Activated CD4-positive, alpha-beta memory T cell treated with anti-CD3 and anti-CD28 coated beads for 36 hours (primary cell): ENCODE measurements at regions of chr3 and their contacts with region 1.

Region 1: DNA sequence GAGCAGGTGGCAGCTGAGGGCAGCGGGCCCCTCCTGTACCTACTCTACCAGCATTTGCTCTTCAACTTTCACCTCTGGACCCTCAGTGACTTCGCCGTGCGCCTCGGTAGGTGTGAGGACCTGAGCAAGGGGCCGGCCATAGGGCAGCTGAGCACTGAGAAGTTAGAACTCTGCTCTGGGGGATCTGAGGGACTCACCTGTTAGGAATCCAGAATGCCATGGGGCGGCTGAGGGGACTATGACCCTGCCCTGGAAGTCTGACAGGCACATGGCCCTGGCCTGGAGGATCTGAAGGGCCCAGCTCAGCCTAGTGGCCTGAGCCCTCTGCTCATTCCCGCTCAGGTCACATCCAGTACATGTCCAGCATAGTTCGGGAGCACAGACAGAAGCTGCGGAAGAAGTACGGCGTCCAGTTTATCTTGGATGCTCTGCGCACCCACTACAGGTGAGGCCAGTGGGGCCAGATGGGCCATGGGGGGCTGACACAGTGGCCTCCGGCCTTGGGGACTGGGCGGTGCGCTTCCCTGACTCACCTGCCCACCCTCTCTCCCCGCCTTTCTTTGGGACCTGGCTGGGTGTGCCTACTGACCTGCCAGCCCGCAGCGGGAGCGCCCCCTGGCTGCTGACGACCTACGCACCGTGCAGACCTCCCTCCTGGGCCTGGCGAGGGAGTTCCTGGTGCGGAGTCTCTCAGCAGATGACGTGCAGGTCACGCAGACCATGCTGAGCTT is 18.8 kb downstream of the NBEAL2 start:
- DNase-seq: peak; percentile 82
- H3K4me3 Mint-ChIP-seq: no peak overlapping the region
- H3K27ac Mint-ChIP-seq: peak overlapping the region; percentile 66
- H3K4me1 Mint-ChIP-seq: peaks cover 17% of the 10 kb centered on the region
- H3K27me3 Mint-ChIP-seq: no peaks in the 10 kb centered on the region

Region 2: DNA sequence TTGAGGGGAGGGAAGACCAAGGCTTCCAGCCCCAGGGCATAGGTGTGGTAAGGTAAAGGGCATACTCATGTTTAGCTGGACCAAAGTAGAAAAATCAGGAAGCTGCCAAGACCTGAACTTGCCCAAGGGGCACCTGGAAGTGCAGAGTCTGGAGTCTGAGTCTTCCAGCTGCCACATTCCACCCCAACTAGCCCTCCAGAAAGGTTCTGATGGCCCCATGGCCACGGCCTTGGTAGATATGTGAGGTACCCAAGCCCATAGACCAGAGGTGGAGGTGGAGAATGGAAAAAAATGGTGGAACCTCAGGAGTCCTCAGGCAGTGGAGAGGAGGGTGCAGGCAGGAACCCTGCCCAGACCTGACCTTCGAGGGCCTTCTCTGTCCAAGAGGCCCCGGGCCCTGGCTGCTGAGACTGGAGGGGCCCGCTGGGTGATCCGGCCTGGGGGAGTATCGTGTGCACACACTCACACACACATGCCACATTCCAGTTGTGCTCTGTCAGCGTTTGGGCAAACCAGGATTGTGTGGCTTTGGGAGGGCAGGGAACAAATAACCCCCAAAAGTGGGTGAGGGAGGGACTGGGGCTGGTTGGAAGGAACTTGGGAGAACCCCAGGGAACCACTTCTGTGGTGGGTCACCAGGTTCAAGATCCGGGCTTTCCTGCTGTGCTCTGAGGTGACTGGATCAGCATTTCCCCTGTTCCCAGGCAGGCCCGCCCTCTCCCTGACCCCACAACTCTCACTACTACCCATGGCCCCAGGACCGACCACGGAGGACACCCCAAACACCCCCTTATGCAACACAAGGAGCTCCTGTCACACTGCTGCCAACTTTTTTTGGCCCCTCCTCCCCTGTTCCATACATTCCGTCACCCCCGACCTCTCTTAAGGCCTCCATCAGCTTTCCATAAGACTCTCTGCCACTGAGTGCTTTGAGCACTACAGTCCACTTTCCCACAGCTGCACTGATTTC is 146.6 kb before region 1 on chr3:
- CTCF ChIA-PET with region 1: no interaction called
- POLR2A ChIA-PET with region 1: no interaction called
- intact Hi-C with region 1: no loop called
- DNase-seq: peak; percentile 4
- H3K4me3 Mint-ChIP-seq: no peak overlapping the region
- H3K27ac Mint-ChIP-seq: no peak overlapping the region
- H3K4me1 Mint-ChIP-seq: no peaks in the 10 kb centered on the region
- H3K27me3 Mint-ChIP-seq: no peaks in the 10 kb centered on the region

Region 3: DNA sequence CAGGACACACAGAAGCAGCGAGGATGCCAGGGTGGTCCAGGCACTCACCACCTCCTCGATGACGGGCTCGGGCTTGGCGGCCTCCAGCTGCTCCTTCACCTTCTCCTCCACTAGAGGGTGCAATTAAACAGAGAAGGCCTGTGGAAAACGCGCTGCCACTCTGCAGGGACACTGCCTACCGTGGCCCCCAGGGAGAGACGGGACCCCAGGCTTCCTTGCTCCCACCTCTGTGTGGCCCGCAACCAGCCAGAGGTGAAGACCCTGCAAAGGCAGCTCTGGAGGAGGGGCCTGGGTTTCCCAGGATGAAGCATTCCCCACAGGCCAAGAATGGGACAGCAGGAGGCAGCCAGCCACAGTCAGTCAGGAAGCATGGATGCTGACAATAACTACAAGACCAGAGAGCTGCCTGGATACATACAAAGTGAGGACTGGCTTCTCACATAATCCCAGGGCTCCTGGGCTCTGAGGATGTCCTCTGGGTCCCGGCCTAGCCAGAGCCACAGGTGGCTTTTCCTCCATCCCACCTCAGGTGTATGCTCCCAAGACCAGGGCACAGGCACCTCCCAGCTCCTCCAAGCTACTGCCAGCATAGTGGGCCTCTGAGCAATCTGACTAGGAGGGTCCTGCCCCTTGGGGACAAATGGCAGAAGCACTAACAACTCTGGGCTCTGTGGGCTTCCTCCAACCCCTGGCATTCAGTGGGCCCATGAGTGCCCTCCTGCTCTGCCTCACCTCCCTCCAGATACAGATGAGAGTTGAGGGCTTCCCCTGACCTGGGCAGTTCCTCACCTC is 74.5 kb before region 1 on chr3:
- CTCF ChIA-PET with region 1: interaction called, 22 read pairs
- POLR2A ChIA-PET with region 1: no interaction called
- intact Hi-C with region 1: loop called (anchors 1 kb)
- DNase-seq: peak; percentile 55
- H3K4me3 Mint-ChIP-seq: no peak overlapping the region
- H3K27ac Mint-ChIP-seq: no peak overlapping the region
- H3K4me1 Mint-ChIP-seq: peaks cover 27% of the 10 kb centered on the region
- H3K27me3 Mint-ChIP-seq: no peaks in the 10 kb centered on the region

Region 4: GRCh38 chr3:47113669-47114365 is 115.5 kb after region 1 on chr3:
- CTCF ChIA-PET with region 1: no interaction called
- POLR2A ChIA-PET with region 1: no interaction called
- intact Hi-C with region 1: no loop called
- DNase-seq: no peak
- H3K4me3 Mint-ChIP-seq: no peak overlapping the region
- H3K27ac Mint-ChIP-seq: no peak overlapping the region
- H3K4me1 Mint-ChIP-seq: peaks cover 10% of the 10 kb centered on the region
- H3K27me3 Mint-ChIP-seq: no peaks in the 10 kb centered on the region